AG04450 (cell line): ENCODE measurements at regions of chr10 and their contacts with region 1.

Region 1: GRCh38 chr10:93080350-93081046 is 6.8 kb downstream of the CYP26A1 start:
- DNase-seq: no peak
- H3K4me3 ChIP-seq: peak overlapping the region; percentile 29; the same call in 1 of the 2 replicates
- H3K27ac ChIP-seq: no peak overlapping the region
- H3K27me3 ChIP-seq: peaks cover 31% of the 10 kb centered on the region
- CTCF ChIP-seq: peak; percentile 86

Region 2: DNA sequence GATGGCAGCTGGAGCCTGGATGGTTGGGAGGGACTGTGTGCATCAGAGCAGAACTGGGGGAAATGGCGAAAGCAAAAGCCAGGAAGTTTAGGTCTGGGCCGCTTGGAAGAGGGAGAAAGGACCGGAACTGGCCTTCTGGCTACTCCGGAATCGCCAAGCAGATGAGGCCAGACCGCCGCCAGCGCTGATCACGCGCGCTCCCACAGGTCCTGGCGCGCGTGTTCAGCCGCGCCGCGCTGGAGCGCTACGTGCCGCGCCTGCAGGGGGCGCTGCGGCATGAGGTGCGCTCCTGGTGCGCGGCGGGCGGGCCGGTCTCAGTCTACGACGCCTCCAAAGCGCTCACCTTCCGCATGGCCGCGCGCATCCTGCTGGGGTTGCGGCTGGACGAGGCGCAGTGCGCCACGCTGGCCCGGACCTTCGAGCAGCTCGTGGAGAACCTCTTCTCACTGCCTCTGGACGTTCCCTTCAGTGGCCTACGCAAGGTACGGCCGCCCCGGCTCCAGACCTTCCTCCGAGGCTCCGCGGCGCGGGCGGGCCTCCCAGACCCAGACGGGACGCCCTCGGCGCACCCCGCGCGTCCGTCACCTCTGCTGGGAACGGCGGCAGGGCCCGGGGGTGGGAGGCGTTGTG is 17.9 kb before region 1 on chr10:
- CTCF ChIA-PET with region 1: interaction called, 24 read pairs
- POLR2A ChIA-PET with region 1: no interaction called
- DNase-seq: no peak
- H3K4me3 ChIP-seq: peak overlapping the region; percentile 53
- H3K27ac ChIP-seq: no peak overlapping the region
- H3K27me3 ChIP-seq: peaks cover 70% of the 10 kb centered on the region
- CTCF ChIP-seq: peak; percentile 47

Region 3: DNA sequence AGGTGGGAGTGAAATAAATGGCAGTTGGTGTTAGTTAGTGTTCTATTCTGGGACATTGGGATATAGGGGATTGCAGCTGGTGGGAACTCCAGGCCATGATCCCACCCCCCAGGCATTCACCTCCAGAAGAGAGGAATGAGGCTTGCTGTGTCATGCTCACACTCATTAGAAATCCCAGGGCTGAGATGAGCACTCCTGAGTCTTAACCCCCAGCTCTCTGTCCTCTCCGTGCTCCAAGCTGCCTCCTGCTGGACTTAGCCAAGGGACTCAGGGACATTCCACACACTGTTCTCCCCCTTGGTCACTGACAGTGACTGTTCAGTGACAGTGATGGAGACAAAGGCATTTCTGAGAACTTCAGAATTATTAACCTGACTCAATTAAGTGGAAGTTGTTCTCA is 14.7 kb after region 1 on chr10:
- CTCF ChIA-PET with region 1: interaction called, 10 read pairs
- POLR2A ChIA-PET with region 1: no interaction called
- DNase-seq: no peak
- H3K4me3 ChIP-seq: no peak overlapping the region
- H3K27ac ChIP-seq: no peak overlapping the region
- H3K27me3 ChIP-seq: peaks cover 5% of the 10 kb centered on the region
- CTCF ChIP-seq: no peak

Region 4: GRCh38 chr10:93115661-93116383 is 35.3 kb after region 1 on chr10:
- CTCF ChIA-PET with region 1: no interaction called
- POLR2A ChIA-PET with region 1: no interaction called
- DNase-seq: no peak
- H3K4me3 ChIP-seq: no peak overlapping the region
- H3K27ac ChIP-seq: no peak overlapping the region
- H3K27me3 ChIP-seq: peaks cover 7% of the 10 kb centered on the region
- CTCF ChIP-seq: peak; percentile 42

Region 5: DNA sequence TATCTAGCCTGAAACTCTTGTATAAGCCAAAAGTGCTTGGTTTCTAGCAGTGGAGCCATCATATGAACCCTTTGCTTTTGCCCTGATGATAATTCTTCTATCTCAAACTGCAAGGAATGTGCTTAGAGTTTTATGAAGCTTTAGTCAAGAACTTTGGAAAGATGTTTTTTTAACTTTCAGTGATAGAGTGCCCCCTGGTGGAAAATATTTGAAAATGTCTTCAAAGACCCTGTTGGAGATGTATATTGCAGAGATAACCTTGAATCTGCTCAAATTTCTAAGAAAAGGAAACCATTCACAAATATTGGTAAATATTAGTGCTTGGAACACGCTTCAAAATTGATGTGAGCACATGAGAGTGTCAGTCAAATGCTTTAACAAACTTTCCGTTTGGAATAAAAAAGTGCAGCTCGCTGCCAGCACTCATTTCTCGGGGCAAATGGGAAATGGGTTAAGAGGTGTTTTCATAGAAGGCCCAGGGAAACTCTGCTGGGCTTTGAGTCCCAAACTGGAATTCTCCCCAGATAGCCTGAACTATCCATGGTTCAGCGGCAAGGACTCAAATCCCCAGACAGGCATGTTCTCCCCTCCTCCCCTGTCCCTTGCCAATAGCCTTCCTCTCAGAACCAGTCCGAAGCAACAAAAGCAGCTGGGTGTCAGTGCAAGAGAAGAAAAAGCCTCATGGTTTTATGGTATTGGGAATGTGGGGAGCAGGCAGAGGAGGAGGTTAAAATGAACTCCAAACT is 272.3 kb after region 1 on chr10:
- CTCF ChIA-PET with region 1: interaction called, 16 read pairs
- POLR2A ChIA-PET with region 1: no interaction called
- DNase-seq: no peak
- H3K4me3 ChIP-seq: no peak overlapping the region
- H3K27ac ChIP-seq: no peak overlapping the region
- H3K27me3 ChIP-seq: no peaks in the 10 kb centered on the region
- CTCF ChIP-seq: peak; percentile 57